ENCODE measurements at regions of chr2 and their contacts with region 1.

Region 1: DNA sequence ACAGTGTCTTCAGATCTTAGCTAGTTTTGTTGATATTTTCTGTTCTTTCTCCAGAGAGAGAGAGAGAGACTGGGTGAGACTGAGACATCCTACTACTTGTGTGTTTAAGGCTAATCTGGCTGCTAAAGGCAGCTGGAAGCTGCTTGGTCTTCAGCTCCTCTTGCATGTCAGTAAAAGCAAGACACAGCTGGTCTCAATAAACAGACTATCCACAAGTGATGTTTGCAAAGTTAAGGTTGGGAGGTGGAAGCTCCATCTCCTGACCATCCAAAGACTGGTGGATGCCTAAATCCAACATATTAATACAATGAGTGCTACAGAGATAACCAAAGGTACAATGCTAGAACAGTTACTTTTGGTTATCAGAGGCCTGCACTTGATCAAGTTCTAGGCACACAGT is 17.8 kb downstream of the ERFE start:
- DNase-seq: no peak
- ATAC-seq: no peak
- H3K4me3 Mint-ChIP-seq: no peak overlapping the region
- H3K27ac Mint-ChIP-seq: no peak overlapping the region
- H3K4me1 Mint-ChIP-seq: no peaks in the 10 kb centered on the region
- H3K27me3 Mint-ChIP-seq: no peaks in the 10 kb centered on the region
- CTCF ChIP-seq: no peak

Region 2: DNA sequence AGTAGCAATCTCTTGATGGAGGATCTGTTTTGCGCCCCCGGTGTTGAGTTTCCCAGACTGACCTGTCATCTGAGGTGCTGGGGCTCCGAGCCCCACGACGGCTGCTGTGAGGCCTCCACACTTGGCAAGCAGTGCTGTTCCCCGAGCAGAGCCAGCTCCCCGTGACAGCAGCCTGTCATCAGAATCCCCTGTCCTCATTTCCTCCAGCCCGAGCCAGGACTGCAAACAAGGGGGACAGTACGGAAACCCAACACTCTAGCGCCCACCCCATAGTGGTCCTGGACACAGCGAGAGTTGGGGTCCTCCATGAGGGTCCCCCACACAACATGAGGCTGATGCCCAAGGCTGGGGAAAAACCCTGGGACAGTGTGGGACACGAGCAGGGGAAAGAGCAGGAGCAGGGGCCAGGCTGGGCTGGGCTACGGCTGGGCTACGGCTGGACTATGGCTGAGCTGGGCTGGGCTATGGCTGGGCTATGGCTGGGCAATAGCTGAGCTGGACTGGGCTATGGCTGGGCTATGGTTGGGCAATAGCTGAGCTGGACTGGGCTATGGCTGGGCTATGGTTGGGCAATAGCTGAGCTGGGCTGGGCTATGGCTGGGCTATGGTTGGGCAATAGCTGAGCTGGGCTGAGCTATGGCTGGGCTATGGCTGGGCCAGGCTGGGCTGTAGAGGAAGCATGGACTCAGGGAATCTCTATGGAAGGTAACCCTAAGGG is 39.6 kb before region 1 on chr2:
- CTCF ChIA-PET with region 1: no interaction called
- POLR2A ChIA-PET with region 1: no interaction called
- intact Hi-C with region 1: no loop called
- DNase-seq: no peak
- ATAC-seq: no peak
- H3K4me3 Mint-ChIP-seq: no peak overlapping the region
- H3K27ac Mint-ChIP-seq: no peak overlapping the region
- H3K4me1 Mint-ChIP-seq: peaks cover 12% of the 10 kb centered on the region
- H3K27me3 Mint-ChIP-seq: no peaks in the 10 kb centered on the region
- CTCF ChIP-seq: no peak

Region 3: GRCh38 chr2:238187618-238188548 is 11.3 kb after region 1 on chr2:
- CTCF ChIA-PET with region 1: no interaction called
- POLR2A ChIA-PET with region 1: interaction called, 18 read pairs
- intact Hi-C with region 1: no loop called
- DNase-seq: no peak
- ATAC-seq: no peak
- H3K4me3 Mint-ChIP-seq: no peak overlapping the region
- H3K27ac Mint-ChIP-seq: no peak overlapping the region
- H3K4me1 Mint-ChIP-seq: no peaks in the 10 kb centered on the region
- H3K27me3 Mint-ChIP-seq: no peaks in the 10 kb centered on the region
- CTCF ChIP-seq: no peak

Region 4: DNA sequence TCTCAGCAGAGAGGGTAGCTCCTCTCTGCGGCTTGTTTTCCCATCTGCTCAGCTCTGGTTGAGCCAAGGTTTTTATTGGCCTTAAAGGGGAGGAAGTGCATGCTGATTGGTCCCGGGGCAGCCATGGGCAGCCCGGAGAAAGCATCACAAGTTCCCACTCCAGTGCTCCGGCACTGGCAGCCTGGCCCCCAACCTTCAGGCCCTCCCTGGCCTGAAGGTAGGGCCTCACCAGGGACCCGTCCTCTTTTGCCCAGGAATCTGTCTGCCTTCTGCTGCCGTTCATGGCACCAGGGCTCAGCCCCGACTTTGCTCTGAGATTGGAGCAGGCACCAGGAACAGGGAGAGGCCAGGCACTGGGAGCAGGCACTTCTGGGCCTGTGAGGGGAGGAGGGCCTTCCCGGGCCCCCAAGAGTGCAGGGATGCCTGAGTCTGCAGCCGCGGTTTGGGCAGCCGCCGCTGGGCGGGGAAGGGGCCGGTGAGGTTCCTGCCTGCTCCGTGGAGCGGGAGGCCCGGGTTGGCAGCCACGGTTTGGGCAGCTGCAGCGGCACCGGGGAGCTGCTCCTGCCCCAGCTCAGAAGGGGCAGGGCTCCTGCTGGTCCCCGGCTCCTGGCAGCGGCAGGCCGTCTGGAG is 44.4 kb after region 1 on chr2:
- CTCF ChIA-PET with region 1: no interaction called
- POLR2A ChIA-PET with region 1: no interaction called
- intact Hi-C with region 1: no loop called
- DNase-seq: no peak
- ATAC-seq: no peak
- H3K4me3 Mint-ChIP-seq: peak overlapping the region; percentile 35
- H3K27ac Mint-ChIP-seq: no peak overlapping the region
- H3K4me1 Mint-ChIP-seq: no peaks in the 10 kb centered on the region
- H3K27me3 Mint-ChIP-seq: peaks cover 8% of the 10 kb centered on the region
- CTCF ChIP-seq: no peak

Region 5: DNA sequence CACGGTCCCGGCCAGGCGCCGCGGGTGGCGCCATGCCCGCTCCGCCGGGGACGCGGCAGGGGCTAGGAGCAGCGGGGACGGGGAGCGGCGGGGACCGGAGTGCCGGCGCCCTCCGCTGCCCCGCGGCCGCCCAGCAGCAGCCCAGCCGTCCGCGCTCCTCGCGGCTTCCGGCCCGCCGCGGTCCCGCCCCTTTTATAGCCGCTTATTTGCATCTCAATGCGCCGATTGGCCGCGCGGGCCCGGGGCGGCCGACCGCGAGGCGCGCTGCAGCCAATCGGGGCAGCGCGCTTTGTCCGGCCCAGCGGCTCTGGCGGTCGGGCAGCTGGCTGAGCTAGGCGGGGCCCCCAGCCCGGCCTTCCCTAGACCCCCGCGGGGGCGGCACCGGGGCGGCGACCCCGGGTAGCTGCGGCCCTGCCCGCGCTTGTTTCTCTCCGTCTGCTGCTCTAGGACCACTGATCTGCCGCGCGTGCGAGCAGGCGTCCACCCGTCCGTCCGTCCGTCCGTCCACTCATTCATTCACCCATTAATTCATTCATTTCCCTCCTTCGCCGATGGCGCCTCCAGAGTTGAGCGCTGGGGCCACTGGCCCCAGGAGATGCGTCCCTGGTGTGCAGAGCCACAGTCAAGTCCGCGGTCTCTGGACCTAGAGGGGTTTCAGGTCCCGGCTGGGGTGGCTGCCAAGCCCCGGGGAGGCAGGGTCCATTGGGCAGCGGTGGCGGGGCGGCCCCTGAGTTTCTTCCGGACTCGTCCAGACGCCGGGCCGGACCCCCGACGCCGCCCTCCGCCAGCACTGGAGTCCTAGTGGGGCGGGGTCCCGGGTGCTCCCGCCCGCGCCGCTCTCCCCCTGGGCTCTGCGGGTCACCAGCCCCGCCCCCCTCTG is 63.5 kb after region 1 on chr2 and contains the start of gene HES6:
- CTCF ChIA-PET with region 1: no interaction called
- POLR2A ChIA-PET with region 1: no interaction called
- intact Hi-C with region 1: no loop called
- DNase-seq: peak; percentile 77
- ATAC-seq: peak; percentile 86
- H3K4me3 Mint-ChIP-seq: peak within 1 kb of the TSS; percentile 86
- H3K27ac Mint-ChIP-seq: peak within 1 kb of the TSS; percentile 68
- H3K4me1 Mint-ChIP-seq: peaks cover 13% of the 10 kb centered on the region
- H3K27me3 Mint-ChIP-seq: peaks cover 12% of the 10 kb centered on the region
- CTCF ChIP-seq: no peak
- total RNA-seq, gene HES6: 4.4 and 5.0 TPM in 2 replicates

Measured in activated B cell treated with CpG ODN at 0.5 μM for 24 hours (primary cell).